ENCODE measurements at regions of chr11 and their contacts with region 1.

Region 1: GRCh38 chr11:86456052-86456939 is 81.6 kb downstream of the CCDC81 start:
- H3K4me3 Mint-ChIP-seq: no peak overlapping the region
- H3K27ac Mint-ChIP-seq: no peak overlapping the region
- H3K4me1 Mint-ChIP-seq: peaks cover 21% of the 10 kb centered on the region
- H3K27me3 Mint-ChIP-seq: no peaks in the 10 kb centered on the region

Region 2: DNA sequence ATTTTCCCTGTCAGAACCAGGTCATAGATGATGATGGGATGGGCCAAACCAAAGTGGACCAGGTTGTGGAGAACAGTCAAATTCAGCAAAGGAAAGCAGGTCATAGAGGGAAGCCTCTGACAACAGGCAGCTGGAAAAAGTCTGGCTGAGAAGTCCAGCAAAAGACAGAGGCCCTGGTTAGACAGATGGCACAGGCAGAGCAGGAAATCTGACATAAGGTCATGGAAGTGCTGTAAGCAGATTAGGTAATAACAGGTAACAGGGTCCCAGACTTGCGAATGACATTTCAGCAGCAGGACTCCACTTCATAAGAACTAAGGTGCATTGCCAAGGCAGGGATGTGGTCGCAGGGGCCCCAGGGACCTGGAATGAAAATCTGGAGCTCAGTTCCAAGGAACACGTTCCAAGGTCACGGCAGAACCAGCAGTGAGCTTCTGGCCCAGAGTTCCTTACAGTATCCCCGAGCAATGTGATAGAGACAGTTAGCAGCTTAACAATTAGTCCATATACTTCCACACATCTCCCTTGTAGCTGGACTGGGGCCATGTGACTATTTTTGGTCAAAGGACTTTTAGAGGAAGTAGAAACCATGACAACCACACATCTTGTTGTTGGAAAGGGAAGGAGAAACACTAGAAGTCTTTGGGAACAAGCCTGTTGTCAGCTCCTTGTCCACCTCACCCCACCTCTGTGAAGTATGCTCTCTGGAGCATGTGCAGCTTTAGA is 140.7 kb after region 1 on chr11:
- intact Hi-C with region 1: no loop called
- H3K4me3 Mint-ChIP-seq: no peak overlapping the region
- H3K27ac Mint-ChIP-seq: peak overlapping the region; percentile 63
- H3K4me1 Mint-ChIP-seq: peaks cover 26% of the 10 kb centered on the region
- H3K27me3 Mint-ChIP-seq: no peaks in the 10 kb centered on the region

Region 3: GRCh38 chr11:86608251-86608799 is 152.0 kb after region 1 on chr11:
- intact Hi-C with region 1: loop called (anchors 1 kb)
- H3K4me3 Mint-ChIP-seq: no peak overlapping the region
- H3K27ac Mint-ChIP-seq: no peak overlapping the region
- H3K4me1 Mint-ChIP-seq: no peaks in the 10 kb centered on the region
- H3K27me3 Mint-ChIP-seq: no peaks in the 10 kb centered on the region

Region 4: GRCh38 chr11:86688398-86689179 is 232.3 kb after region 1 on chr11:
- intact Hi-C with region 1: no loop called
- H3K4me3 Mint-ChIP-seq: no peak overlapping the region
- H3K27ac Mint-ChIP-seq: no peak overlapping the region
- H3K4me1 Mint-ChIP-seq: peaks cover 19% of the 10 kb centered on the region
- H3K27me3 Mint-ChIP-seq: no peaks in the 10 kb centered on the region

Region 5: DNA sequence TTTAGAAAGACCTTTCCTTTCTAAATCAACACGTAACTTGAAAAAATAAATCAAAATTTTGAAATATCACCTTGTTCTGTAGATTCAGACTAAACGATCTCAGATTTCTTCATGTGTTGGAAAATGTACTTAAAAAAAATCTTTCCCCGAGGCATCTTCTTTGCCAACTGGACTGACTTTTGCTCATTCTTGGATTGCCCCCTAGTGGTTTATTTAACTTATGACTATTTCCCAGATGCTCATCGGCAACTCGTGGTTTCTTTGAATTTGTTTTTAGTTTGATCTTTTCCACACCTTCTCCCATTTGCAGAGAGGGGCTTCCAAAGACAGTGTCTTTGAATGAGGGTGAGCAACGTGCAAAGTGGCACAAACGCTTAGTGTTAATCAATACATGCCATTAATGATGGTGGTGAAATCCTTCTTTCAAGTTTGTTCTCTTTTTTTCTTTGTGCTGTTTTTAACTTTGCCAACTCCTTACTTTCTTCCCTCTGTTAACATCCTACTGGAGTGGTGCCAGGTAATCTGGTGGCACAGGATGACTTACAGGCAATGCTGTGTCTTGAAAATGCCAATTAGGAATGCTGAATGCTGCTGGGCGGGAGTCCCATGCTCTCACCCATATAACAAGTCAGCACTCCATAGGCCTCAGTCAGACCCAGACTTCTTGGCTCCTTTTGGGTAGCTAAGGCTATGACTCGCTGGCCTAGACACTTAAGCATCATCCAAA is 362.3 kb after region 1 on chr11:
- intact Hi-C with region 1: loop called (anchors 1 kb)
- H3K4me3 Mint-ChIP-seq: no peak overlapping the region
- H3K27ac Mint-ChIP-seq: no peak overlapping the region
- H3K4me1 Mint-ChIP-seq: peaks cover 9% of the 10 kb centered on the region
- H3K27me3 Mint-ChIP-seq: peaks cover 10% of the 10 kb centered on the region